Tibial artery (tissue), 4 donors: ENCODE measurements at regions of chrX and their contacts with region 1.

Region 1: DNA sequence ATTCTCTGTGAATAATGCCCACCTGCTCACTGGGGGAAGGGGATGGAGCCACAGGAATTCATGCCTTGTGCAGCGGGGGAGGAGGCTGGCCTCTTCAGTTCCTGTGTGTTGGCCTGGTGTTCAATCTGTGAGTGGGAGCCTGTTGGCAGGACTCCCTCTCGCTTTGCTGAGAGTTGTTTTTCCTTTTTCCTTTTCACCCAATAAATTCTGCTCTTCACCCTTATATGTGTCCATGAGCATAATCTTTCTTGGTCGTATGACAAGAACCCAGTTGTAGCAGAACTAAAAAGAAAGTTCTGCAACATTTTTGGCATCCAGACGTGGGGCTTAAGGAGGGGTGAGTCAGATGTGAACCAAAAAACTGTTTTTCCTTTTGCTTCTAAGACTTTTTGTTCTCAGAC is 235.2 kb upstream of the HDX start:
- DNase-seq: peak; percentile 43 to 74
- H3K4me3 ChIP-seq: peak overlapping the region; percentile 11 to 21
- H3K27ac ChIP-seq: peak overlapping the region; percentile 74 to 81
- H3K4me1 ChIP-seq: peaks cover 0 to 36% (median 2%) of the 10 kb centered on the region in 4 donors
- H3K27me3 ChIP-seq: no peaks in the 10 kb centered on the region
- CTCF ChIP-seq: no peak

Region 2: GRCh38 chrX:84907324-84907968 is 170.0 kb after region 1 on chrX:
- intact Hi-C with region 1: loop called (anchors 5 kb)
- DNase-seq: no peak
- H3K4me3 ChIP-seq: no peak overlapping the region
- H3K27ac ChIP-seq: peak overlapping the region; percentile 21 to 41
- H3K4me1 ChIP-seq: peaks cover 0 to 10% (median 0%) of the 10 kb centered on the region in 4 donors
- H3K27me3 ChIP-seq: no peaks in the 10 kb centered on the region
- CTCF ChIP-seq: peak; percentile 31 to 47